WTC11 (cell line): ENCODE measurements at regions of chr2 and their contacts with region 1.

Region 1: GRCh38 chr2:98487806-98488651 is 43.4 kb downstream of the INPP4A start:
- DNase-seq: peak; percentile 41
- ATAC-seq: peak; percentile 65
- H3K4me3 Mint-ChIP-seq: no peak overlapping the region
- H3K27ac Mint-ChIP-seq: no peak overlapping the region
- H3K4me1 Mint-ChIP-seq: peaks cover 44% of the 10 kb centered on the region
- H3K27me3 Mint-ChIP-seq: no peaks in the 10 kb centered on the region
- CTCF ChIP-seq: 0 out of 2 replicates have a peak, but pooled peaks have one; percentile 12

Region 2: GRCh38 chr2:98452396-98453027 is 35.5 kb before region 1 on chr2:
- CTCF ChIA-PET with region 1: interaction called, 11 read pairs
- POLR2A ChIA-PET with region 1: no interaction called
- DNase-seq: no peak
- ATAC-seq: no peak
- H3K4me3 Mint-ChIP-seq: no peak overlapping the region
- H3K27ac Mint-ChIP-seq: no peak overlapping the region
- H3K4me1 Mint-ChIP-seq: peaks cover 80% of the 10 kb centered on the region
- H3K27me3 Mint-ChIP-seq: no peaks in the 10 kb centered on the region
- CTCF ChIP-seq: no peak

Region 3: GRCh38 chr2:98465456-98466226 is 22.4 kb before region 1 on chr2:
- CTCF ChIA-PET with region 1: interaction called, 25 read pairs
- POLR2A ChIA-PET with region 1: no interaction called
- DNase-seq: no peak
- ATAC-seq: no peak
- H3K4me3 Mint-ChIP-seq: no peak overlapping the region
- H3K27ac Mint-ChIP-seq: peak overlapping the region; percentile 80; the same call in 1 of the 2 replicates
- H3K4me1 Mint-ChIP-seq: peaks cover 51% of the 10 kb centered on the region
- H3K27me3 Mint-ChIP-seq: no peaks in the 10 kb centered on the region
- CTCF ChIP-seq: no peak

Region 4: DNA sequence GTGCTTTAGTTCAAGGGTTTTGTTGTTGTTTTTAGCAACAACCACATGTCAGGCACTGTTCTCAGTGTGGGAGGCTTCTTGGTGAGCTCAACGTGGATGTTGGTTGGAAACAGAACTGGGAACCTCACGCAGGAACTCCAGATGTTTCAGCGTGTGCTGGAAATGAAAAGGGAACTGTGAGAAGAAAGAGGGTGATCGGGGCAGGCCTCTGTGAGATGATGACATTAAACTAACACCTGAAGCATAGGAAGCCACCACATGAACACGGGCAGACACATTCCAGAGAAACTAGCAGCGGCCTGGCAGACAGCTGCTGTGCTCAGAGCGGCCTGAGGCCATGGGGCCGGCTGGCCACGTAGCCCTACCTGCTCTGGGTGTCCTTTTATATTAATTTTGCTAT is 53.9 kb after region 1 on chr2:
- CTCF ChIA-PET with region 1: interaction called, 10 read pairs
- POLR2A ChIA-PET with region 1: no interaction called
- DNase-seq: no peak
- ATAC-seq: no peak
- H3K4me3 Mint-ChIP-seq: no peak overlapping the region
- H3K27ac Mint-ChIP-seq: no peak overlapping the region
- H3K4me1 Mint-ChIP-seq: no peaks in the 10 kb centered on the region
- H3K27me3 Mint-ChIP-seq: no peaks in the 10 kb centered on the region
- CTCF ChIP-seq: no peak